MCF 10A (cell line): ENCODE measurements at regions of chr16 and their contacts with region 1.

Region 1: DNA sequence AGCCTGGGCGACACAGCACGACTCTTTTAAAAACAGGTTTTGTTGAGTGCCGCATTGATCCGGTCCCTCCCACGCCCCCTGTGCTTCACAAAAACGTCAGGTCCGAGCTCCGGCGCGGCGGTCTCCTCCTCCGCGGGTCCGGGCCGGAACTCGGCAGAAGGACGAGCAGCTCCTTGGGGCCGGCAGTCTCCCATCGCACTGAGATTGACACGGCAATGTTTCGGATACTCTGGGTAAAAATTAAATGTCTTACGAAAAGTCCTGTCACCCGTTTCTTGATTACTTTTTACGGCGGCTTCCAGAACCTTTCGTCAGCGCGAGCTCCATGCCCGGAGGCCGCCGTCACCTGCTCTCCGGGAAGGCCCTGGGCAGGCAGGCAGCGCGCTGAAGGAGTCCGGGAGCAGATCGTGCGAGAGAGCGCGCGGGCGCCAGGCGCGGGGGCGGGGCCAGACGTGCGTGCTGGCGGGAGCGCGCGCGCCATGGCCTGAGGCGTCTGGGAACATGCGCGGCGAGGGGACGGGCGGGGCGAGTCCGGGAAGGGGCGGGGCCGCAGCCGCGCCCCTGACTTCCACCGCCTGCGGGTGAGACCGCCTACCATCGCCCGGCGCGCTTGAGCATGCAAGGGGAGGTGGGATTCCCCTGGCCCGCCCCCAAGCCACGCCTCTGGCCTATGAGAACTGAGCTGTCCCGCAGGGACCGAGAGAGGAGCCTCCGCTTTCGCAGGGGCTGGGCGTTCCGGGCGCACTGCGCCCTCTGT is 11.7 kb upstream of the SRL start:
- DNase-seq: peak; percentile 99
- H3K4me3 Mint-ChIP-seq: peak overlapping the region; percentile 90
- H3K27ac Mint-ChIP-seq: peak overlapping the region; percentile 98
- H3K4me1 Mint-ChIP-seq: no peaks in the 10 kb centered on the region
- H3K27me3 Mint-ChIP-seq: no peaks in the 10 kb centered on the region
- CTCF ChIP-seq: no peak

Region 2: GRCh38 chr16:3983081-3983520 is 270.5 kb before region 1 on chr16:
- CTCF ChIA-PET with region 1: interaction called, 37 read pairs
- POLR2A ChIA-PET with region 1: interaction called, 7 read pairs
- intact Hi-C with region 1: loop called (anchors 1 kb)
- DNase-seq: peak; percentile 77
- H3K4me3 Mint-ChIP-seq: no peak overlapping the region
- H3K27ac Mint-ChIP-seq: no peak overlapping the region
- H3K4me1 Mint-ChIP-seq: peaks cover 16% of the 10 kb centered on the region
- H3K27me3 Mint-ChIP-seq: no peaks in the 10 kb centered on the region
- CTCF ChIP-seq: peak; percentile 77

Region 3: DNA sequence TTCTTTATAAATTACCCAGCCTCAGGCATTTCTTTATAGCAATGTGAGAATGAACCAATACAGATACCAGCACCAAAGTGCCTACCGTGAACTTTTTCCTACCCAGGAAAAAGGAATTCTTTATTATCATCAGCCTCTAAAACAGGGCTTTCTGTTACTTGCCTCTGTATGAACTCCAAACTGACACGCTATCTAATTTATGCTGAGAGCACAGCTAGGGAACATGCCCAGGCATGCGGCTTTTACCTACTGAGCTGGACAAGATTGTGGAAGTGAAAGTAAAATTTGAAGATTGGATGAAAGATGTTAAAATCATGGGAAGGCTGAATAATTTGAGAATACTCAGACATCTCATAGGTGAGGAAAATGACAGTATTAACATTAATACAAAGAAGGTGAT is 112.9 kb before region 1 on chr16:
- CTCF ChIA-PET with region 1: interaction called, 3 read pairs
- POLR2A ChIA-PET with region 1: interaction called, 17 read pairs
- intact Hi-C with region 1: no loop called
- DNase-seq: peak; percentile 74
- H3K4me3 Mint-ChIP-seq: peak overlapping the region; percentile 39
- H3K27ac Mint-ChIP-seq: peak overlapping the region; percentile 99
- H3K4me1 Mint-ChIP-seq: peaks cover 24% of the 10 kb centered on the region
- H3K27me3 Mint-ChIP-seq: no peaks in the 10 kb centered on the region
- CTCF ChIP-seq: no peak

Region 4: GRCh38 chr16:4183237-4184036 is 70.1 kb before region 1 on chr16:
- CTCF ChIA-PET with region 1: interaction called, 7 read pairs
- POLR2A ChIA-PET with region 1: interaction called, 29 read pairs
- intact Hi-C with region 1: no loop called
- DNase-seq: peak; percentile 91
- H3K4me3 Mint-ChIP-seq: peak overlapping the region; percentile 65
- H3K27ac Mint-ChIP-seq: peak overlapping the region; percentile 49
- H3K4me1 Mint-ChIP-seq: peaks cover 12% of the 10 kb centered on the region
- H3K27me3 Mint-ChIP-seq: no peaks in the 10 kb centered on the region
- CTCF ChIP-seq: no peak

Region 5: DNA sequence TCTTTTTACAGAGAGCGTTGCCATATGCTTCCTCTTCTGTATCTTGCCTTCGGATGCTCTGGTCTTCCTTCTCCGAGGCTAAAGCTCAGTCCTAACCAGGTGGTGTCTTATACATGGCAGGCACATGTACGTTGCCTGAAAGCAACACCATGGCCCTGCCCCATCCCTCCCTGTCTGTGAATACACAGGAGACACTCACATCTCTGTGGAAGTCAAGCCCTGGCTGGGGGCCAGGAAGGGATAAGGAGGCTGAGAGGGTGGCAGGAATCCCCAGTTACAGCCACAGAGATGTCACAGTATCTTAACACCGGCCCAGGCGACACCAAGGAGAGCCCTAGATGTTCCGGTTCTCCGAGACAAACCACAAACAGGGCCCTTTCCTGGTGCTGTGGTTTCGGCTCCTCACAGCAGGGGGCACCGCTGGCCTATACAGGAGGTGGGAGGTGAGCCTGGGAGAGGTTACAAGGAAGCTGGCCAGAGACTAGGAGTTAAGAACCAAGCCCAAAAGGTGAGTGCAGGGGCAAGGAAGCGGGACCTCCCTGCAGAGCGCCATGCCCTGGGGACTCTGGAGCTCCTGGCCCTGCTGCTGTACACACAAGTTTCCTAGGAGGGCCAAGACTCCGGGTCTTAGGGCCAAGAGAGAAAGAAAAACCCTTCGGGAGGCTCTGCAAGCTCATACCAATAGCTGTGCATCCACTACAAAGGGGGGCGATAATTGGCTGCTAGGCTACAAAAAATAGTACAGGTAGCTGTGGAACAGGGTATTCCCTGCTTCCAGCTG is 53.4 kb before region 1 on chr16:
- CTCF ChIA-PET with region 1: interaction called, 109 read pairs
- POLR2A ChIA-PET with region 1: interaction called, 30 read pairs
- intact Hi-C with region 1: loop called (anchors 1 kb)
- DNase-seq: peak; percentile 80
- H3K4me3 Mint-ChIP-seq: no peak overlapping the region
- H3K27ac Mint-ChIP-seq: no peak overlapping the region
- H3K4me1 Mint-ChIP-seq: peaks cover 10% of the 10 kb centered on the region
- H3K27me3 Mint-ChIP-seq: no peaks in the 10 kb centered on the region
- CTCF ChIP-seq: peak; percentile 84

Region 6: DNA sequence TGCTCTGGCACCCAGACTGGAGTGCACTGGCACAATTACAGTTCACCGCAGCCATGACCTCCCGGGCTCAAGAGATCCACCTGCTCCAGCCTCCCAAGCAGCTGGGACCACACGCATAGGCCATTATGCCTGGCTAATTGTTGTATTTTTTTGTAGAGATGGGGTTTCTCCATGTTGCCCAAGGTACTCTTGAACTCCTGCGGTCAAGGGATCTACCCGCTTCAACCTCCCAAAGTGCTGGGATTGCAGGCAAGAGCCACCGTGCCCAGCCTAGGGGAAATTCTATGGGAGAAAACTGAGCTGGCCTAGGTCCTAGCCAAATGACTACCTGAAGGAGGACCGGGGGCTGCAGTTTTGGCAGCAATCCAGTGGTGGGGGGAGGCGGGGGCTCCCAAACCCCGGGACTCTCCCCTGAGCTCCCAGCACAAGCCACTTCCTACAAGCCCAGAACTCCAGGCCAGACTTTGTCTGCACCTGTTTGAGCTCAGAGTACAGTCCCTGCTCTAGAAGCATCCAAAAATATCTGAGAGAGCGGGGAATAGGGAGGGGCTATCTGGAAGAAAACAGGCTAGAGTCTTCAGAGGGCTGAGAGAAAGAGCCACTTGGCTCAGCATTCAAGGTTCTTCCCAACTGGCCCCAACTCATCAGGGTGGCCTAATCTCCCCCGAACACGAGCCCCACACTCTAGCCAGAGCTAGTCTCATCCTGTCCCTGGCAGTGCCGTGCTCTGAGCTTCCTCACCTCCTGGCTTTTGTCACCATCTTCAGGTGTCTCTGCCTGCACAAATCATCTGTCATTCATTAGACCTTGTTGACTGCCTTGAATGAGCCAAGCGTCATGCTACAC is 20.8 kb before region 1 on chr16:
- CTCF ChIA-PET with region 1: interaction called, 11 read pairs
- POLR2A ChIA-PET with region 1: interaction called, 5 read pairs
- intact Hi-C with region 1: no loop called
- DNase-seq: no peak
- H3K4me3 Mint-ChIP-seq: no peak overlapping the region
- H3K27ac Mint-ChIP-seq: no peak overlapping the region
- H3K4me1 Mint-ChIP-seq: no peaks in the 10 kb centered on the region
- H3K27me3 Mint-ChIP-seq: no peaks in the 10 kb centered on the region
- CTCF ChIP-seq: no peak

Region 7: DNA sequence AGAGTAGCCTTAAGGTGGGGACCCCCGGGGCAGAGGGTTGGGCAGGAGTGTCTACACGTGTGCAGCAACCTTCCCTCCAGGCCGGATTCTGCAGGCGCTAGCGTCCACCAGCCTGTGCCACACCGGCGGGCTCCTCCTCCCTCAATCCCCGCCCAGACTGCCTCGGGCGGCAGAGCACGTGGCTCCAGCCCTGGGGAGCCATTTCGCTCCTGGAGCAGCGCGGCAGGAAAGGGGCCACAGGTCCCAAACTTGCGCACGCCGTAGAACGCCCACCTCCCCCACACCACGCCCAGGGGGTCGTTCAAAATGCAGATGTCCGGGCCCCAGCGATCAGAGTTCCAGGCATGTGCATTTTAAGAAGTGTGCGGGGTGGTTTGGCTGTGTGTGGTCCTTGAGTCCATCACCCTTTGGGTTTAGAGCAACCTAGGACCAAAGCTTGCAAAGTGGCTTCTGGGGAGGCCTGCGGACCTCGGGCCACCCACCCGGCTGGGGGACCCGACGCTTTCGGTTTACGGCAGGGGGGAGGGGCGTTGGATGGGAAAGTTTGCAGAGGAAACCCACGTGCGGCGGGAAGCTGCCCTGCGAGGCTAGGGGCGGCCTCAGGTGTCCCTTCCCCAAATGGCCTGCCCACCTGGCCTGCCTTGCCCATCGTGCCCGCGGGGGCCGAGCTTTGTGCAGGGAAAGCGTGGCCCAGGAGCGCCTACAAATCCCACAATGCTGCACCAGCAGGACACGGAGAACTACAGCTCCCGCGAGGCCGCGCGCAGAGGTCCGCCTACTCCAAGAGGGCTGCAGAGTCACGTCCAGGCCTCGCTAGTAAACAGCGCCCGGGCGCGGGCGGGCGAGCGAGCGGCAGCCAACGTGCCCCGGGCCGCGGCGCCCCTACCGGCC is 17.8 kb after region 1 on chr16:
- CTCF ChIA-PET with region 1: interaction called, 33 read pairs
- POLR2A ChIA-PET with region 1: interaction called, 32 read pairs
- intact Hi-C with region 1: no loop called
- DNase-seq: peak; percentile 92
- H3K4me3 Mint-ChIP-seq: peak overlapping the region; percentile 84
- H3K27ac Mint-ChIP-seq: peak overlapping the region; percentile 67
- H3K4me1 Mint-ChIP-seq: peaks cover 5% of the 10 kb centered on the region
- H3K27me3 Mint-ChIP-seq: no peaks in the 10 kb centered on the region
- CTCF ChIP-seq: no peak